Activated CD4-positive, alpha-beta T cell treated with anti-CD3 and anti-CD28 coated beads, Interleukin-2, amount 10 ng/mL, durations not matched to agents 7 days and 5 days (primary cell): ENCODE measurements at regions of chr15 and their contacts with region 1.

Region 1: GRCh38 chr15:63504247-63504978 is at the start of gene USP3:
- DNase-seq: peak; percentile 92
- H3K4me3 Mint-ChIP-seq: peak within 1 kb of the TSS; percentile 98
- H3K27ac Mint-ChIP-seq: peak within 1 kb of the TSS; percentile 96
- H3K4me1 Mint-ChIP-seq: peaks cover 74% of the 10 kb centered on the region
- H3K27me3 Mint-ChIP-seq: no peaks in the 10 kb centered on the region
- total RNA-seq, gene USP3: 62.7 to 70.8 TPM

Region 2: GRCh38 chr15:63256433-63257274 is 247.8 kb before region 1 on chr15:
- CTCF ChIA-PET with region 1: no interaction called
- POLR2A ChIA-PET with region 1: no interaction called
- DNase-seq: no peak
- H3K4me3 Mint-ChIP-seq: no peak overlapping the region
- H3K27ac Mint-ChIP-seq: no peak overlapping the region
- H3K4me1 Mint-ChIP-seq: peaks cover 8% of the 10 kb centered on the region
- H3K27me3 Mint-ChIP-seq: no peaks in the 10 kb centered on the region

Region 3: GRCh38 chr15:63466378-63467192 is 37.8 kb before region 1 on chr15:
- CTCF ChIA-PET with region 1: interaction called, 10 read pairs
- POLR2A ChIA-PET with region 1: interaction called, 4 read pairs
- DNase-seq: peak; percentile 80
- H3K4me3 Mint-ChIP-seq: no peak overlapping the region
- H3K27ac Mint-ChIP-seq: peak overlapping the region; percentile 4
- H3K4me1 Mint-ChIP-seq: peaks cover 17% of the 10 kb centered on the region
- H3K27me3 Mint-ChIP-seq: peaks cover 5% of the 10 kb centered on the region

Region 4: GRCh38 chr15:63487076-63487757 is 17.2 kb before region 1 on chr15:
- CTCF ChIA-PET with region 1: interaction called, 31 read pairs
- POLR2A ChIA-PET with region 1: interaction called, 5 read pairs
- DNase-seq: peak; percentile 91
- H3K4me3 Mint-ChIP-seq: no peak overlapping the region
- H3K27ac Mint-ChIP-seq: peak overlapping the region; percentile 7
- H3K4me1 Mint-ChIP-seq: peaks cover 65% of the 10 kb centered on the region
- H3K27me3 Mint-ChIP-seq: no peaks in the 10 kb centered on the region